ENCODE measurements at regions of chr11 and their contacts with region 1.

Region 1: GRCh38 chr11:14566331-14567063 is 46.3 kb upstream of the PSMA1 start:
- DNase-seq: no peak
- H3K4me3 ChIP-seq: no peak overlapping the region
- H3K27ac ChIP-seq: no peak overlapping the region
- H3K4me1 ChIP-seq: no peaks in the 10 kb centered on the region
- H3K27me3 ChIP-seq: no peaks in the 10 kb centered on the region
- CTCF ChIP-seq: no peak

Region 2: DNA sequence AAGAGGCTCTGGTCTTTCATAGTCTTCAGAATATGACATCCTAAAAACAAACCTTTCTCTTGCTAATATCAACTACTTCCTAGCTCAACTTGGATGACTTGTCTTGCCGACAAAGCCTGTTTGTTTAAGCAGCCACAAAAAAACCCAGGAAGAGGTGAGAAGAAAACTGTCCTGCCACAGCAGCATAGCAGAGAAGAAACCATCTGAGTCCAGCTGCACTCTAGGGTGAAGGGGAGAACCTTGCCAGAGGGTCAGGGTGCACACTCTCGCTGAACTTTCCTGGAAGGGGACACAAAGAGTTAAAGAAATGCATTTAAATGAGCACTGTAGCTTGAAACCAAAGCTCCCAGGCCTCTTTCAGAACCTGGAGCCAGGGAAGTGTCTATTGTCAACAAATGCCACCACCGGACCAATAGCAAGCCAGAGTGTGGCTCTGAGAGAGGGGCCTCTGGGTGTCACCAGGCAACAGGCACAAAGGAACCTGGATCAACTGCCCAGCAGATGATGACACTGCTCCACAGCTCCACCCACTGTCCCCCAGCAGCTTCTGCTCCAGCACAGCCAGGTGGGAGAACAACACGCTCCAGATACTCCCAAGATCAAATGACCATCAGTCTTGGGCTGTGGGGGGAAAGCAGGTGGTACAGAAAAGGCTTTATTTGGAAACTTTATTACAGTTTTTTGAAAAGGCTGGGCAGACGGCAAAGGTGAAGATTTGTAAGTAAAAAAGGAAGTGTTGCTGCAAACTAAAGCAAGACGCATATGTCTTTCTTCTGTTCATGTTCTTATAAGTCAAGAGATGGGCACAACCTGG is 1451.7 kb before region 1 on chr11:
- intact Hi-C with region 1: loop called (anchors 5 kb)
- DNase-seq: no peak
- H3K4me3 ChIP-seq: no peak overlapping the region
- H3K27ac ChIP-seq: no peak overlapping the region
- H3K4me1 ChIP-seq: no peaks in the 10 kb centered on the region
- H3K27me3 ChIP-seq: no peaks in the 10 kb centered on the region
- CTCF ChIP-seq: no peak

Measured in tibial artery (tissue), 4 donors.